Activated T-helper 1 cell treated with anti-CD3 and anti-CD28 coated beads, Interleukin-12 subunit alpha, Interleukin-12 subunit beta, Interleukin-2, Interleukin-4 antibody, amounts not matched to agents 30 ng/mL and 10 ng/mL and 1 ng/mL, durations not matched to agents 14 hours and 24 hours and 36 hours (primary cell): ENCODE measurements at regions of chr6 and their contacts with region 1.

Region 1: DNA sequence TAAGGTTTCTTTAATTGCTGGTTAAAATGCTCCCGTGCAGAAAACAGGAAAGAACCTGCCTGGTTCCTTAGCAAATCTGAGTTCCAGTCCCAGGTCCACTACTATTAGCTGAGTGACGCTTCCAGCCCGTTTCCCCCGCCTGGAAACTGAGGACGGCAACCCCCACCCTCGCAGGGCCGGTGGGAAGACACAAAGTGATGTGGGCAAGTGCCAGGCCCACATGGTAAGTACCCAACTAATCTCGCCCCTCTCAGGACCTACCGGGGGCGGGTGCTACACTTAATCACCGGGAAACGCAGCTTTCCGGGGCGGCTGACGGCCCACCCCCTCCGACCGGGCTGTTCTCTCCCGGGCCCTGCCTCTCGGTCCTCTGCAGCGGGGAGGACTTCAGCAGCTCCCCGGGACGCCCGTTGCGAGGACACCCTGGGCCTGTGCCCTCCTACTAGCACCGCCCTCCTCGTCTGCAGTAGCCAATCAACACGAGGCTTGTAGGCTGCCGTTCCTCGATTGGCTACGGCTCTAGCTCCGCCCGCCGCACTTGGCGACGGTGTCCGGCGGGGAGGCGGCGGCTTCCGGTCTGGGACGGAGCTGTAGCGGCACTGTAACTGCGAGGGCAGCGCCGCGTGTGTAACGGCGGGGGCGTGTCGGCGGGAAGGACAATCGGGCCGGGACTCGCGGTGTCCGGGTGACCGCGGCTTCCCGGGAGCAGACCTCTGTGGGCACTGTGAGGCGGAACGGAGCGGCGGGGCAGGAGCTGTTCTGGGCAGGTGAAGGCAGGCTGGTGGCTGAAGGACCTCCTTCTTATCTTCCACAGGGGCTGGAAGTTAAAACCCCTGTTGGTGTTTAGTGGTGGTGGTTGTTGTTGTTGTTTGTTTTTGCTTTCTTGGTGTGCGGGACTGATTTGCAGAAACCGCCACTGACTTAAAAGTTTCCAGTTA is at the start of gene ZBTB9:
- DNase-seq: peak; percentile 96
- H3K4me3 Mint-ChIP-seq: peak within 1 kb of the TSS; percentile 95
- H3K27ac Mint-ChIP-seq: peak within 1 kb of the TSS; percentile 88
- H3K4me1 Mint-ChIP-seq: peaks cover 42% of the 10 kb centered on the region
- H3K27me3 Mint-ChIP-seq: no peaks in the 10 kb centered on the region
- total RNA-seq, gene ZBTB9: 15.8 and 17.0 TPM in 2 replicates

Region 2: GRCh38 chr6:33095681-33096080 is 358.6 kb before region 1 on chr6:
- intact Hi-C with region 1: no loop called
- DNase-seq: no peak
- H3K4me3 Mint-ChIP-seq: no peak overlapping the region
- H3K27ac Mint-ChIP-seq: no peak overlapping the region
- H3K4me1 Mint-ChIP-seq: no peaks in the 10 kb centered on the region
- H3K27me3 Mint-ChIP-seq: peaks cover 28% of the 10 kb centered on the region

Region 3: DNA sequence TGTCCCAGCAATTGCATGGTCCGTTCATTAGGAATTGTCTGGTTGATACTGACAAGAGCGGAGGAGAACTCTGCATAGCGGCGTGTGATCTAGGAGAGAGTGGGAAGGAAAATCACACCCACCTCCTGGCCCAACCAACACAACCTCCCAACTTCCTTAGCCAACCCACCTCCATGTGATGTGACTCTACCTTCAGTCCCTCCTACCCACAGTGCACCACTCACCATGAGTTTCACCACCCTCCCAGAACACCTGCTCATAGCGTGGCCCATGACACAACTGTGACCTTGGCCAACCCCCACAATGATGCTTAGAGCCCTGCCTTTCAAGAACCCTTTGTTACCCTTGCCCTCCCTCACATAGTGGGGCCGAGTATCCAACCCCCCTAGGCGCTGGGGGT is 190.3 kb before region 1 on chr6:
- intact Hi-C with region 1: no loop called
- DNase-seq: no peak
- H3K4me3 Mint-ChIP-seq: no peak overlapping the region
- H3K27ac Mint-ChIP-seq: no peak overlapping the region
- H3K4me1 Mint-ChIP-seq: peaks cover 8% of the 10 kb centered on the region
- H3K27me3 Mint-ChIP-seq: no peaks in the 10 kb centered on the region

Region 4: DNA sequence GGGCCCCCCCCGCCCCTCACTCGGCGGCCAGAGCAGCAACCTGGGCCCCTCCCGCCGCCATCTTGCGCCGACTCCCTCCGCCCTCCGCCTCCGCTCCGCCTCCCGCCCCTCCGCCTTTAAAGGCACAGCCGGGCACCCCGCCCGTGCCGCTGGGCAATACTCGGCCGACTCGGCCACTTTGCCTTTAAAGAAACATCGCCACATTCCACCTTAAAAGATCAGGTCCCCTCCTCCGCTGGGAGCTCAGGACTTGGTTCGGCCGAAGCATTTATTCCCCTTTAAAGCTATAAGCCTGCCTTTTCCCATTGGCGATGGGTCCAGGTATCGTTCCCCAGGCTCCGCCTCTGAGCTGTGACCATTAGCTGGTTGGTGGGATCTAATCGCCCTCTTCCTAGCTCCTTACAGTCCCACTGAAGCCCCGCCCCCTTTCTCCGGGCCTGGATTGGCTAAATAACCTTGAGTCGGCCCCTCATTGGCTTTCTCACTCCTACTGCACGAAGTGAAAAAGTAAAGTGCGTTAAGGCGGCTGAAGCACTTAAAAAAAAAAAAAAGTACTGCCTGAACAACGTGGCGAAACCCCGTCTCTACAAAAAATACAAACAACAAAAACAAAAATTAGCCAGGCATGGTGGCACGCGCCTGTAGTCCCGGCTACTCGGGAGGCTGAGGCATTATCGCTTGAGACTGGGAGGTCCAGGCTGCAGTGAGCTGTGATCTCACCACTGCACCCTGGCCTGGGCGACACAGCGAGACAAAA is 136.4 kb before region 1 on chr6 and contains the start of gene ZBTB22:
- intact Hi-C with region 1: loop called (anchors 1 kb)
- DNase-seq: peak; percentile 92
- H3K4me3 Mint-ChIP-seq: peak within 1 kb of the TSS; percentile 97
- H3K27ac Mint-ChIP-seq: peak within 1 kb of the TSS; percentile 94
- H3K4me1 Mint-ChIP-seq: peaks cover 74% of the 10 kb centered on the region
- H3K27me3 Mint-ChIP-seq: no peaks in the 10 kb centered on the region
- total RNA-seq, gene ZBTB22: 12.5 and 14.7 TPM in 2 replicates

Region 5: DNA sequence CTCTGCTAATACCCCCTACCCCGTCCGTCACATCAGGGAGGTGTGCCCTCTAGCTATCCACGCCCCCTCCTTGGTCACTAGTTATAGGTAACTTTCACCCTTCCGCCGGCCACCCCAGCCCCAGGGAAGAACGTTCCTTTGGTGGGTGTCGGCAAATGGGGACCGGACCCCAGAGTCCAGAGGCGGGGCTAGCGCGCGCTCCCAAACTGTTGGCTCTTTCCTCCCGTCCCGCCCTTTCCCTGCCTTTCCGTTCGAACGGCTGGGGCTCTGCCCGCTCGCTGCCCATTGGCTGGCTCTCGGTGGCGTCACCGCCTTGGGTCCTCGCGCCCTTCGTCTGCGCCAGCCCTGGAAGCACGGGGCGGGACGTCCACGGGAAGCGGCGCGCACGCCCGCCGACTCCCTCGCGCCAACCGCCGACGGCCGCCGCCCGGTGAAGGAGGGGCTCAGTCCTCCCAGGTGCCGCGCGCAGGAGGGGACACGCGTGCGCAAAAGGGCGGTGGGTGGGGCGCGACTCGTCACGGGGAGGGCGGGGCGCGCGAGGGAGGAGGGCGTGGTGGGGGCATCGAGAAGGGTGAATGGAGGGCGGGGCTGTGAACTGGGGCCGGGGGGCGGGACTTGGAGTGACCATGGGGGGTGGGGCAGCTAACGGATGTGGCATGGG is 44.1 kb before region 1 on chr6:
- intact Hi-C with region 1: loop called (anchors 1 kb)
- DNase-seq: peak; percentile 99
- H3K4me3 Mint-ChIP-seq: peak overlapping the region; percentile 91
- H3K27ac Mint-ChIP-seq: peak overlapping the region; percentile 96
- H3K4me1 Mint-ChIP-seq: peaks cover 50% of the 10 kb centered on the region
- H3K27me3 Mint-ChIP-seq: no peaks in the 10 kb centered on the region

Region 6: DNA sequence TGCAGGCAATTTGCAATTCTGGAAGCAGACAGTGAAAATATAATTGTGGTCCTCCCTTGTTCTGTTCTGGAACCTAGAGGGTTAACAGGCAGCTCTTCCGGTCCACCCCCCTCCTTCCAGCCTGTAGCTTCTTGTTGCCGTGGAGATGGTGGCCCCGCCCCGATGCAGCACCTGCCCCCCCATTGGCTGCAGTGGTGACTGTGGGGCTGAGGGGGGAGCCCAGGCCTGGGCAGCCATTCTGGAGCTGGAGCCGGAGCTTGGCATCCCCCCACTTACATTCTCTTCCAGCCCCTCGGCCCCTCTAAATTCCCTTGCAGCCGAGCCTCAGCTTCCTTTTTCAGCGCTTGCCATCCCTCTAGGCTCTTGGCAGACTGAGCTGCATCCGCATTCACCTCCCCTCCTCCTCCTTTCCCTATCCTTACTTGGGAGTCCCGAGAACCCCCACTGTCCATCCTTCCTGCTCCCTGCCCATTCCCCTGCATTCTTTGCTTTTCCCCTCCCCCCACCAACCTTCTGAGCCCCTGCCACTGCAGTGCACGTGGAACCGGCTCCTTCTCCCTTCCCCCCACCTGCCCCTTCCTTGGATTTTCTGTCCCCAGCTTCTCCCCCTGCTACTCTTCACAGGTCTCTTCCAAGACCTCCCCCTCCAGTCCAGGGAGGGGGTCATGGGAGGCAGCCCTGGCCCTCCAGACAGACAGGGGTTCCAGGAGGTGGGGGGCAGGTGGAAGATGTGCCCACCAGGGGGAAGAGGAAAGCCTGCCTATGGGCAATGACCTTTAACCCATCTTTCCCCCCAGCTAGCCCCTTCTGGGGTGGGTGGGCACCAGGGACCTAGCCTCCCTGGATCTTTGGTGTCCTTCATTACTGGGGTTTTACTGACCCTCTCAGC is 23.0 kb before region 1 on chr6:
- intact Hi-C with region 1: loop called (anchors 1 kb)
- DNase-seq: peak; percentile 75
- H3K4me3 Mint-ChIP-seq: peak overlapping the region; percentile 89
- H3K27ac Mint-ChIP-seq: peak overlapping the region; percentile 88
- H3K4me1 Mint-ChIP-seq: peaks cover 55% of the 10 kb centered on the region
- H3K27me3 Mint-ChIP-seq: no peaks in the 10 kb centered on the region

Region 7: DNA sequence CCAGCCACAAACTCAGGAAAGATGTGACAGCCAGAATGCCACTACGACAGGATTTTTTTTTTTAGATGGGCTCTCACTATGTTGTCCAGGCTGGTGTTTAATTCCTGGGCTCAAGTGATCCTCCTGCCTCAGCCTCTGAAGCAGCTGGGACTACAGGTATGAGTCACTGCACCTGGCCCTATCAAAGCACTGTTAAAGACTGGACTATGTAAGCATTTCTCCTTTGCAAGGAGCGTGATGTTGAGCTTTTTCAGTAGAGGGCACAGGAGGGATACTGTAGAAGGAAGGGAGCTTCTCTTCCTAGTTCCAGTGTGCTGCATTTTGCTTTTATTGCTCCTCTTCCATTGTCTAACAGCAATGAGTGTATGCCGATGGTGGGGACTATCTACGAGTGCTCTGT is 35.9 kb after region 1 on chr6:
- intact Hi-C with region 1: no loop called
- DNase-seq: no peak
- H3K4me3 Mint-ChIP-seq: no peak overlapping the region
- H3K27ac Mint-ChIP-seq: no peak overlapping the region
- H3K4me1 Mint-ChIP-seq: peaks cover 7% of the 10 kb centered on the region
- H3K27me3 Mint-ChIP-seq: peaks cover 2% of the 10 kb centered on the region

Region 8: GRCh38 chr6:33570806-33571636 is 116.7 kb after region 1 on chr6:
- intact Hi-C with region 1: loop called (anchors 1 kb)
- DNase-seq: peak; percentile 91
- H3K4me3 Mint-ChIP-seq: peak overlapping the region; percentile 83
- H3K27ac Mint-ChIP-seq: peak overlapping the region; percentile 99
- H3K4me1 Mint-ChIP-seq: peaks cover 62% of the 10 kb centered on the region
- H3K27me3 Mint-ChIP-seq: no peaks in the 10 kb centered on the region

Region 9: GRCh38 chr6:33620856-33621710 is 166.8 kb after region 1 on chr6 and contains the start of gene ITPR3:
- intact Hi-C with region 1: loop called (anchors 2 kb)
- DNase-seq: peak; percentile 68
- H3K4me3 Mint-ChIP-seq: peak within 1 kb of the TSS; percentile 96
- H3K27ac Mint-ChIP-seq: peak within 1 kb of the TSS; percentile 90
- H3K4me1 Mint-ChIP-seq: peaks cover 49% of the 10 kb centered on the region
- H3K27me3 Mint-ChIP-seq: no peaks in the 10 kb centered on the region
- total RNA-seq, gene ITPR3: 42.7 and 42.9 TPM in 2 replicates

Region 10: DNA sequence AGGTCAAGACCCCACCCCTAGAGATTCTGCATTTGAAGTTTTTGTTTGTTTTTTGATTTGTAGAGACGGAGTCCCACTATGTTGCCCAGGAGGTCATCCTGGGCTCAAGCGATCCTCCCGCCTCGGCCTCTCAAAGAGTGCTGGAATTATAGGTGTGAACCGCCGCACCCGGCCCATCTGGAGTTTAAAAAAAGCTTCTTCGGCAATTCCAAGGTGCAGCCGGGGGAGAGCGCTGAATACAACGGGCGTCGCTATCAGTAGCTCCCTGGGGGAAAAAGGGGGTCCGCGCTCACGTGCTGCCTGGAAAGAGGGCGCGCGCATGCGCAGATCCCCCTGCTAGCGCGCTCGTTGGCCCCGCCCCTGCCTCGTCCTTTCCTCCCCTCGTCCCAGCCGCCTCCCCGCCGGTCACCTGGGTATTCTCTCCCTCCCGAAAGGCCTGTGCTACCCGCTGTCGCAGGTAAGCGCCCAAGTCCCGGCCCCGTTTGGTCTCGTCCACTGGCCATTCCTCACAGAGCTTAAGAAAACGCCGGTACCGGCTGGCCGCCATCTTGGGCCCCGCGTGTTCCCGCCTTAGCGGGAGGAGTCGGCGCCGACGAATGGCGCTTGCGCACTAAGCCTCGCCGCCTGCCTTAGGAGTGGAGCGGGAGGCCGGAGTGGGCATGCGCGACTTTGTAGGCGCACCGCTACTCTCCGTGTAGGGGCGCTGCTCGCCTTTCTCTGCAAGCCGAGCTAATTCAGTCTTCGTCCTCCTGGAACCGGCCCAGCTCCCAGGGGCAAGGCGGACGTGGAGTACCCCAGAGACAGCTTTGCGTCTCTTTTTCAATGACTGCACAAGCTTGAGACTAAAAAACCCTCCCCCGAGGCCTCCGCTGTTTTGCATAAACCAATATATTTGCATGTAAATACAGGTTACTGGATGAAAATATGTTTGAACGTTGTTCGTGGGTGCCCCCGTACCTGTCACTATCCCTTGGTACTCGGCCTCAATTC is 257.2 kb after region 1 on chr6 and contains the start of gene UQCC2:
- intact Hi-C with region 1: loop called (anchors 1 kb)
- DNase-seq: peak; percentile 96
- H3K4me3 Mint-ChIP-seq: peak within 1 kb of the TSS; percentile 95
- H3K27ac Mint-ChIP-seq: peak within 1 kb of the TSS; percentile 99
- H3K4me1 Mint-ChIP-seq: peaks cover 42% of the 10 kb centered on the region
- H3K27me3 Mint-ChIP-seq: peaks cover 3% of the 10 kb centered on the region
- total RNA-seq, gene UQCC2: 123 and 139 TPM in 2 replicates

Region 11: GRCh38 chr6:33885124-33886057 is 431.1 kb after region 1 on chr6:
- intact Hi-C with region 1: no loop called
- DNase-seq: no peak
- H3K4me3 Mint-ChIP-seq: no peak overlapping the region
- H3K27ac Mint-ChIP-seq: no peak overlapping the region
- H3K4me1 Mint-ChIP-seq: peaks cover 23% of the 10 kb centered on the region
- H3K27me3 Mint-ChIP-seq: peaks cover 15% of the 10 kb centered on the region